Activated naive CD4-positive, alpha-beta T cell treated with anti-CD3 and anti-CD28 coated beads for 36 hours (primary cell): ENCODE measurements at regions of chr1 and their contacts with region 1.

Region 1: DNA sequence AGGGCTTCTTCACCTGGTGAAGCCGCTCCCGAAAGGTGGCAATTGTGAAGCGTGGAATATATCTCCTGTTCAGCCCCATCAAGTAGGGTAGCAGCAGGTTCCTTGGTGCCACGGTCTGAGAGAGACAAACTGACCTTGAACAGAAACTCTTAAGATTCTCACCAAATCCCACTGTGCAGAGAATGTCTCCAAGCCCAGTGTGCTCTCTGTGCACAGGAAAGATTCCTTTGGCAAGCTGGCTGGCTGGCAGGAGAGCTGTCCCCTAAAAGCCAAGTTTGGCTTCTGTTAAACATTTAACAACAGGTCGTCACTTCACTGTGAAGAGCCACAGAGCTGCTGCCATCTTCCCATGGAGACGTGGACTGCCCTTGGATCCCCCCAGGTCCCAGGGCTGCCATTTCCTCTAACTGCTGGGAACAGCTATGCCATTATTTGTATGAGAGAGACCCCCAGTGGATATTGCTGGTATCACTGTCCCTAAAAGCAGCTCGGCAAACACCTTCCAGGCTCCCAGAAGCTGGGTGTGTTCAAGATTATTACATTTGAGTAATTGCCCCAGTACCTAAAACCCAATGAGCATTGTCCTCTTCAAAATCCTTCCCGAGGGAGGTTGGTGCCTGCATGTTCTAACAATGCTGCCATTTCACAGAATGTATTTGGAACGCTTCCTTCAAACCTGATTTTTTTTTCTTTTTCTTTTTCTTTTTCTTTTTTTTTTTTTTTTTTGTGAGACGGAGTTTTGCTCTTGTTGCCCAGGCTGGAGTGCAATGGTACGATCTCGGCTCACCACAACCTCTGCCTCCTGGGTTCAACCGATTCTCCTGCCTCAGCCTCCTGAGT is 71.8 kb downstream of the CD58 start:
- DNase-seq: peak; percentile 70
- H3K4me3 Mint-ChIP-seq: no peak overlapping the region
- H3K27ac Mint-ChIP-seq: no peak overlapping the region
- H3K4me1 Mint-ChIP-seq: peaks cover 17% of the 10 kb centered on the region
- H3K27me3 Mint-ChIP-seq: no peaks in the 10 kb centered on the region

Region 2: GRCh38 chr1:115807723-115808122 is 691.3 kb before region 1 on chr1:
- CTCF ChIA-PET with region 1: interaction called, 4 read pairs
- intact Hi-C with region 1: loop called (anchors 5 kb)
- DNase-seq: peak; percentile 67
- H3K4me3 Mint-ChIP-seq: no peak overlapping the region
- H3K27ac Mint-ChIP-seq: no peak overlapping the region
- H3K4me1 Mint-ChIP-seq: no peaks in the 10 kb centered on the region
- H3K27me3 Mint-ChIP-seq: peaks cover 20% of the 10 kb centered on the region

Region 3: DNA sequence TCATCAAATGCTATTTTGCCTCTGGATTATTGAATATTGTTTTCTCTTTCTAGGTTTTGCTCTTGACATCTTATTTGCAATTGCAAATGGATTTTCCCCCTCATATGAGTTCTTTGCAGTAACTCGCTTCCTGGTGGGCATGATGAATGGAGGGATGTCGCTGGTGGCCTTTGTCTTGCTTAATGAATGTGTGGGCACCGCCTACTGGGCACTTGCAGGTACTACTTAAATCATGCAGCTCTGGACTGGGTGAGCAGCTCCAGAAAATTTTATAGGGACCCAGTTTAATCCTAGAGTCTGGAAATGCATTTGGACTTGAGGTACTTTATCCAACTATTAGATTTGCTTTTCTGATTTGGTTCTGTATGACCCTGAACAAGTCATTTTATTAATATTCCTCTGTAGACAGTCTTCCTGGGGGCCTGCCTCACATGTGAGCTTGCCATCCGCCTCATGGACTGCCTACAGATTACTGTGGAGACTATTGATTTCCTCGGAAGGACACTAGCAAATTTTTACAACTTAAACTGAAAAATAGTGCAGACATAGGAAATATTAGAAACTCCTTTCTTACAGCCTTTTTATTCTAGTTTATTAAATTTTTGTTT is 478.2 kb before region 1 on chr1:
- CTCF ChIA-PET with region 1: no interaction called
- intact Hi-C with region 1: loop called (anchors 5 kb)
- DNase-seq: peak; percentile 70
- H3K4me3 Mint-ChIP-seq: no peak overlapping the region
- H3K27ac Mint-ChIP-seq: no peak overlapping the region
- H3K4me1 Mint-ChIP-seq: no peaks in the 10 kb centered on the region
- H3K27me3 Mint-ChIP-seq: no peaks in the 10 kb centered on the region

Region 4: GRCh38 chr1:116033322-116033721 is 465.7 kb before region 1 on chr1:
- CTCF ChIA-PET with region 1: no interaction called
- intact Hi-C with region 1: no loop called
- DNase-seq: no peak
- H3K4me3 Mint-ChIP-seq: no peak overlapping the region
- H3K27ac Mint-ChIP-seq: no peak overlapping the region
- H3K4me1 Mint-ChIP-seq: no peaks in the 10 kb centered on the region
- H3K27me3 Mint-ChIP-seq: no peaks in the 10 kb centered on the region

Region 5: DNA sequence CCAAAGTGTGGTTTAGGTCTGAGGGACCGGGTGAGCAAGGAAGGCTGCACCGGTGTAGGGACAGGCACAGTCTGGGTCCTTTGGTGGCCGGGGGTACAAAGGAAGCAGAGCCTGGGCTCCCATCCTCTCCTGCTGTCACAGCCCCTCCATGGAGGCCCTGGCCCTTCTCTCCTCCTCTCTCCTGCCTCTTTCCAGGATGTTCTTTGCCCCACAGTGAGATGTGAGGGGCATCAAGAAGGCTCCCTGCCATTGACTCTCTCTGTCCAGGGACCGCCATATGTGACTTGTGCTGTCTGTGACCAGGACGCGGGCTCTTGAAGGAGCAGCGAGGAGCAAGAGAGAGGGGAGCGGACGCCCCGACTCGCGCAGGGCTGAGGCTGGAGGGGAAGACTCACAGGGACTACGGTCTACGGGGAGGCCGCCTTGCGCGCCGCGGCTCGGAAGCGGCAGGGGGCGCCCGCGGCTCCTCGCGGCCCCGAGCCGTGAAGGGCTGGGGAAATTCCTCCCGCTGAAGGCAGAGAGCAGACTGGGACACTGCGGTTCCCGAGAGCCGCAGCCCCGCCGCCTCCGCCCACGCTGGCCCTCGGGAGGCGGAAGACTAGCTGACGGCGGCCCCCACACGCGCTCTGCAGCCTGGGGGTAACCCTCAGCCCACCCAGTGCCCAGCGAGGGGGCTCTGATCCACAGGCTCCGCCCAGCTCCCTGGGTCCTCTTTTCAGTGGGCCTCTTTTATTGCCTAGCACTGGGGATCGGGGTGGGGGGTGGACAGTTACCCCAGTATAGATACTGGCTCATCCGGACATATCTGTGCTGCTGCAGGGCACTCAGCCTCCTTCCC is 347.1 kb before region 1 on chr1:
- CTCF ChIA-PET with region 1: interaction called, 15 read pairs
- intact Hi-C with region 1: loop called (anchors 1 kb)
- DNase-seq: peak; percentile 86
- H3K4me3 Mint-ChIP-seq: peak overlapping the region; percentile 60
- H3K27ac Mint-ChIP-seq: peak overlapping the region; percentile 14
- H3K4me1 Mint-ChIP-seq: peaks cover 18% of the 10 kb centered on the region
- H3K27me3 Mint-ChIP-seq: no peaks in the 10 kb centered on the region

Region 6: GRCh38 chr1:116514708-116515525 is 15.9 kb after region 1 on chr1:
- CTCF ChIA-PET with region 1: interaction called, 18 read pairs
- intact Hi-C with region 1: loop called (anchors 1 kb)
- DNase-seq: peak; percentile 73
- H3K4me3 Mint-ChIP-seq: no peak overlapping the region
- H3K27ac Mint-ChIP-seq: peak overlapping the region; percentile 76
- H3K4me1 Mint-ChIP-seq: peaks cover 33% of the 10 kb centered on the region
- H3K27me3 Mint-ChIP-seq: no peaks in the 10 kb centered on the region